Ascending aorta (tissue), 2 donors: ENCODE measurements at regions of chr3 and their contacts with region 1.

Region 1: DNA sequence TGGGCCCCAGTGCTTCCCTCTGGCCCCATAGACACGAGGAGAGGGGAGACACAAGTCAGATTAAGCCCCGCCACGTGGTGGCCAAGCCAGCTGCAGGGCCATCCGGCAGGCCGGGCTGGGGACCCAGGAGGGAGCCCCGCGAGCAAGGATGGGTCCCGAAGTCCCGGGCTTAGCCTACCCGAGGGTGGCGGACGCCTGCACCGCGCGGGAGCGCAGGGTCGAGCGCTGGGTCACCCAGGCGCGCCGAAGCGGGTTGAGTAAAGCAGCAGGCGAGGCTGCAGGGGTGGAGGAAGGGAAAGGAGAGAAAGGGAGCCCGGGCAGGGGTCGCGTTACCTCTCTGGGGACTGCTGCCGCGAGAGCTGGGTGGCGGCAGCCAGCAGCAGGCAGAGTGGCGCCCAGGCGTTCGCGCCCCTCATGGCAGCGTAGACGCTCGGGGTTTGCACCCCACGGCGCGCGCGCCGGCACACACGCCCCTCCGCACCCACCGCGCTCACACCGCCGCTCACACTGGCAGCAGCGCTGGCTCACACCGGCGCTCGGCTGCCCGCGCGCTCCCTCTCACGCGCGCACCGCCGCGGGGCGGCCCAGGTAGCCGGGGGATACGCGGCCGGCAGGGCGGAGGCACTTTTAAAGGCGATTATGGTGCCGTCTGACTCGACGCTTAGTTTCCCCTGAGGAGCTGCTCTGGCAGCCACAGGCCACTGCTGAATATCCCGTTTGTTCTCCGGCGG is at the start of gene PCOLCE2:
- DNase-seq: no peak
- H3K4me3 ChIP-seq: peak within 1 kb of the TSS; percentile 79 to 81
- H3K27ac ChIP-seq: peak within 1 kb of the TSS; percentile 64 to 69
- H3K4me1 ChIP-seq: peaks cover 0 to 6% of the 10 kb centered on the region in 2 donors
- H3K27me3 ChIP-seq: no peaks in the 10 kb centered on the region
- CTCF ChIP-seq: peak in 1 of 3 experiments; percentile 18
- total RNA-seq, gene PCOLCE2: 58.1 TPM

Region 2: DNA sequence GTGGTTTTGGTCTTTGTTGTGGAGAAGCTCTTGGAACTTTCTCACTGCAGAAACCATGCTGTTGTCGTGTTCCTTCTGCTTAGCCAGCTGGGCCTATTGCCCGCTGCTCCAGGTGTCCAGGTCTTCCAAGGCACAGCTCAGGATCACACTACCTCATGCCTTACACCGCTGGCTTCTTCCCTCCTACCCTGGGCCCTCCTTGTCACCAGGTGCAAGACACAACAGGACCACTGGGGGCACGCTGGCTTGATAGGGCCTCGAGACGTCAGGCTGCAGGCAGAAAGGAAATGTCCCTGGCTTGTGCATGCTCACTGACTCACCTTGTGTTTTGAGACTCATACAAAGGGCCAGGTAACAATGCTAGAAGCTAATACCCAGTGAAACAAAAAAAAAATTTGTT is 42.6 kb after region 1 on chr3:
- intact Hi-C with region 1: loop called (anchors 5 kb)
- DNase-seq: no peak
- H3K4me3 ChIP-seq: no peak overlapping the region
- H3K27ac ChIP-seq: no peak overlapping the region
- H3K4me1 ChIP-seq: no peaks in the 10 kb centered on the region
- H3K27me3 ChIP-seq: no peaks in the 10 kb centered on the region
- CTCF ChIP-seq: no peak